ENCODE measurements at regions of chr11 and their contacts with region 1.

Region 1: DNA sequence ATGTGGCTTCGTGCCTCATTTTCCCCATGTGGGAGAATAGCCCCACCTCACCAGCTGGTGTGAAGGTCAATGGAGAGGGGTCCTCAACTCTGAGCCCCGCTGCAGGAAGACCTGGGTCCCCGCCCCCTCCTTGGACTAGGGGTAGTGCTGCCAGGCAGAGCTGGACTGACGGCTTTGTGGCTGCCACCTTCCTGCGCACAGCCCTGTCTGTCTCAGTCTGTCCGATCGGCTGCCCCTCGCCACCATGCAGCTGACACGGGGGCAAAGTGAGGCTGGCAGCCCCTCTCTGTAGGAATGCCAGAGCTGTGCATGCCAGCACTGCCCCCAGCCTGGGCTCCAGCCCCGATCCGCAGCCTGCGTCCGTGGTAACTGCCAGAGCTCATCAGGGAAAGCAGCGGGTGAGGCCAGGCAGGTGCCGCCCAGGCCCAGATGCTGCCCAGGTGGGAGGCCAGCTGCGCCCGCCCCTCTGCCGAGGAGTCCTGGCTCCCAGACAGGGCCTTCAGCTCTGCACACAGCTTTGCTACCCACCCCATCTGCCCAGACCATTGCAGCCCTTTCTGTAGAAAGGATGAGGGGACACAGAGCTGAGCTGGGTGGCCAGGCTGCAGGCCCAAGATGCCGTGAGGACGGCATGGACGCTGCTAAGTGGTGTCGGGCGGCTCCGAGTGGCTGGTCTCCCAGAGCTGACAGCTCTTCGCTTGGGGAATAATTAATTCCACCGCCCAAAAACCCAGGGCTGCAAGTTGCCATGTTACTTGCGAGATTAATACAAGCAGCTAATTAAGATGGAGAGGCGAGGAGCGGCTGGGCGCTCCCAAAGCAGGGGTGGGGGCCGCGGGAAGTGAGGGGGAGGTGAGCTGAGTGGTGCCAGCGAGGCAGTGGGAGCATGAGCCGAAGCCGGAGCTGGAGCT is 19.5 kb upstream of the FLRT1 start:
- DNase-seq: no peak

Region 2: GRCh38 chr11:62024936-62025486 is 1991.2 kb before region 1 on chr11:
- intact Hi-C with region 1: loop called in 1 of 2 experiments (anchors 5 kb)
- DNase-seq: no peak

Region 3: GRCh38 chr11:64036087-64037026 is 20.2 kb after region 1 on chr11:
- intact Hi-C with region 1: no loop called
- DNase-seq: no peak

Region 4: DNA sequence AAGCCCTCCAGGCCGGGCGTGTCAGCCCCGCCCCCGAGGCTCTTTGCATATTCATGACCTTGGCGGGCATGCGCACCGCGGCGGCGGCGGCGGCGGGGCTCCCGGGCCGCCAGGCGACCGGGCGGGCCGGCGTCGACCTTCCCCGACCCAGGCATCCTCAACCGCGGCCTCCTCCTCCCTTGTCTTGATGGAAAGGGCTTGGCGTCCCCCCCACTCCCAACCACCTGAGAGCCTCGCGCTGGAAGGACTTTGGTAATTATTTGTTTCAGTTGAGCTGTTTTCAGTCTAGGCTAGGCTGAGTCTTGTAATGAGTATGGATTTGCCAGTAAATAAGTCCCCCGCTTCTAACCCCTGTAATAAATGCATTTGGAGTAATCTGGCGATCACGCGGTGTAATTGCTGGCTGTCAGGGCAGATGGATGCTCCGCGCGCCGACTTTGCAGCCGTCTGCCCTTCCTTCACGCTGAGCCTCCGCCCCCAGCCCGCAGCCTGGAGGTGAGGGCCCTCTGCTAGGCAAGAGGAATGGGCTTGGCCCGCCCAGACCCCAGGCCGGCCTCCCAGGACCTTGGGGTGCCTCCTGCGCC is 44.8 kb after region 1 on chr11:
- intact Hi-C with region 1: no loop called
- DNase-seq: no peak

Region 5: GRCh38 chr11:64128255-64129006 is 112.2 kb after region 1 on chr11:
- intact Hi-C with region 1: loop called in 1 of 2 experiments (anchors 5 kb)
- DNase-seq: no peak

Measured in posterior vena cava (tissue), 2 donors.